CD8-positive, alpha-beta T cell (primary cell): ENCODE measurements at regions of chr11 and their contacts with region 1.

Region 1: DNA sequence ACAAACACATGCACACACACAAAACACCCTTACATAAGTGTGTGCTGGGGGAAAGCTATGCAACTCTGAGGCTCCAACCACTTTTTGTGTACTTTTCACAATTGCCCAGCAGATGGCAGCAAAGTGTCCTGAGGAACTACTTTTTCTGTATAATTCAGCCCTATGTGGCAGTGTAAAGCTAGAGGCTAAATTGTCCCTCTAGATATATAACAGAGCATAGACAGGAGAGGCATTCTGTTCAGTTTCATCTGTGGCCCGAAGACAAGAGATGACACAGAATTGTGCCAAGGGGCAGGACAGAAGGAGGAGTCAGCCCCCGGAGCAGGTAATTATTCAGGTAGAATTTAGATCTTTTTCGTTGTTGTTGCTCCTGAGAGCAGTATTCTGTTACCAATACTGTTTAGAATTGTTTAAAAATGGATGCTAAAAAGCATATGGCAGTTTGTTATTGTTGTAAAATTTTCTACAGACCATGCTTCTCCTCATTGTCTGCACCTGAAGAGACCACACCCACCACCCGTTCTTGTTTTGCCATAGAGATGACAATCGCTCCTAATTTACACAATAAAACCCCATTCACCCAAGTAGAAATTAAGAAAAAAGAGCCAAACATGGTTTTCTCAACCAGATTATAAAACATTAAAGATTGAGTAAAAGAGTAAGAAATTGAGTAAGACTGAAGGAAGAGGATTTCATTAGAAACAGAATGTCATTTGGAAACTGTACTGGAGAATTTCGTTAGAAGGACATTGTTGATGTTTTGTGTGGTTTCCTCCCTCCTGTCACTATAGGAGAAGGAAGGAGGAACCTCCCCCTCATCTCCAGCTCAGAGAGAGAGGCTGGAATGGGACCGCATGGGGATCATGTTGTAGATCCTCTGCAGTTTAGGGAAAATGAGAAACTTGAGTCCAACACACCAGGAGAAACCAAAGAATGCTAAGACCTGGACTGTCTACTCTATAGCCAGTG is 14.5 kb upstream of the MS4A7 start:
- DNase-seq: peak; percentile 24 to 72 (median 47)
- ATAC-seq: no peak
- H3K4me3 ChIP-seq: no peak overlapping the region
- H3K4me3 Mint-ChIP-seq: no peak overlapping the region
- H3K27ac ChIP-seq: no peak overlapping the region
- H3K27ac Mint-ChIP-seq: peak overlapping the region; percentile 19
- H3K4me1 ChIP-seq: no peaks in the 10 kb centered on the region
- H3K4me1 Mint-ChIP-seq: no peaks in the 10 kb centered on the region
- H3K27me3 ChIP-seq: no peaks in the 10 kb centered on the region
- H3K27me3 Mint-ChIP-seq: peaks cover 17% of the 10 kb centered on the region
- CTCF ChIP-seq: peak; percentile 75

Region 2: DNA sequence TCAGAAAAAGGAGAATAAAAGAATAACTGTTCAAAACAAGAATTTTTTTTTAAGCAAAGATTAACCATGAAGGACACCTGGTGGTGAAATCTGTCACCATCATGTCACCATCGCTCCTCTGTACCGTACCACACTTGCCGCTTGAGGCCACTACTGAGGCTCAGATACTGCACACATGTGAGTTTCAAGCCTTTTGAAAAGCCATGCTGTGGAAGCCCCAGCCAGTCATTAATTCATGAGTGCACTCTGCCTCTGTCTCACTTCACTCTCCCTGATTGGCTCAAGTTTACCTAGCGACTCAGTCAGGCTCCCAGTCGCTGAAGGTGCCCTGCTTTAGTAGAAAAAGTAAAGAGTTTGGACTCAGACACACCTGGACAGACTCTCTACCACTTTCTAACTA is 122.2 kb after region 1 on chr11:
- CTCF ChIA-PET with region 1: interaction called, 5 read pairs
- POLR2A ChIA-PET with region 1: no interaction called
- intact Hi-C with region 1: loop called in 1 of 2 experiments (anchors 1 kb)
- DNase-seq: peak in 2 of 9 experiments; percentile 36 to 53
- ATAC-seq: no peak
- H3K4me3 ChIP-seq: no peak overlapping the region
- H3K4me3 Mint-ChIP-seq: no peak overlapping the region
- H3K27ac ChIP-seq: no peak overlapping the region
- H3K27ac Mint-ChIP-seq: no peak overlapping the region
- H3K4me1 ChIP-seq: no peaks in the 10 kb centered on the region
- H3K4me1 Mint-ChIP-seq: no peaks in the 10 kb centered on the region
- H3K27me3 ChIP-seq: no peaks in the 10 kb centered on the region
- H3K27me3 Mint-ChIP-seq: peaks cover 2% of the 10 kb centered on the region
- CTCF ChIP-seq: no peak

Region 3: GRCh38 chr11:60615497-60615896 is 251.7 kb after region 1 on chr11:
- CTCF ChIA-PET with region 1: interaction called, 17 read pairs
- POLR2A ChIA-PET with region 1: no interaction called
- intact Hi-C with region 1: loop called in 1 of 2 experiments (anchors 1 kb)
- DNase-seq: no peak
- ATAC-seq: no peak
- H3K4me3 ChIP-seq: no peak overlapping the region
- H3K4me3 Mint-ChIP-seq: no peak overlapping the region
- H3K27ac ChIP-seq: no peak overlapping the region
- H3K27ac Mint-ChIP-seq: no peak overlapping the region
- H3K4me1 ChIP-seq: no peaks in the 10 kb centered on the region
- H3K4me1 Mint-ChIP-seq: peaks cover 3% of the 10 kb centered on the region
- H3K27me3 ChIP-seq: no peaks in the 10 kb centered on the region
- H3K27me3 Mint-ChIP-seq: peaks cover 8% of the 10 kb centered on the region
- CTCF ChIP-seq: no peak

Region 4: GRCh38 chr11:61281581-61282250 is 917.9 kb after region 1 on chr11:
- CTCF ChIA-PET with region 1: no interaction called
- POLR2A ChIA-PET with region 1: no interaction called
- intact Hi-C with region 1: no loop called
- DNase-seq: peak in 3 of 9 experiments; percentile 15 to 25 (median 20)
- ATAC-seq: peak; percentile 42
- H3K4me3 ChIP-seq: no peak overlapping the region
- H3K4me3 Mint-ChIP-seq: no peak overlapping the region
- H3K27ac ChIP-seq: no peak overlapping the region
- H3K27ac Mint-ChIP-seq: no peak overlapping the region
- H3K4me1 ChIP-seq: no peaks in the 10 kb centered on the region
- H3K4me1 Mint-ChIP-seq: no peaks in the 10 kb centered on the region
- H3K27me3 ChIP-seq: no peaks in the 10 kb centered on the region
- H3K27me3 Mint-ChIP-seq: no peaks in the 10 kb centered on the region
- CTCF ChIP-seq: no peak